ENCODE measurements at regions of chr1 and their contacts with region 1.

Region 1: DNA sequence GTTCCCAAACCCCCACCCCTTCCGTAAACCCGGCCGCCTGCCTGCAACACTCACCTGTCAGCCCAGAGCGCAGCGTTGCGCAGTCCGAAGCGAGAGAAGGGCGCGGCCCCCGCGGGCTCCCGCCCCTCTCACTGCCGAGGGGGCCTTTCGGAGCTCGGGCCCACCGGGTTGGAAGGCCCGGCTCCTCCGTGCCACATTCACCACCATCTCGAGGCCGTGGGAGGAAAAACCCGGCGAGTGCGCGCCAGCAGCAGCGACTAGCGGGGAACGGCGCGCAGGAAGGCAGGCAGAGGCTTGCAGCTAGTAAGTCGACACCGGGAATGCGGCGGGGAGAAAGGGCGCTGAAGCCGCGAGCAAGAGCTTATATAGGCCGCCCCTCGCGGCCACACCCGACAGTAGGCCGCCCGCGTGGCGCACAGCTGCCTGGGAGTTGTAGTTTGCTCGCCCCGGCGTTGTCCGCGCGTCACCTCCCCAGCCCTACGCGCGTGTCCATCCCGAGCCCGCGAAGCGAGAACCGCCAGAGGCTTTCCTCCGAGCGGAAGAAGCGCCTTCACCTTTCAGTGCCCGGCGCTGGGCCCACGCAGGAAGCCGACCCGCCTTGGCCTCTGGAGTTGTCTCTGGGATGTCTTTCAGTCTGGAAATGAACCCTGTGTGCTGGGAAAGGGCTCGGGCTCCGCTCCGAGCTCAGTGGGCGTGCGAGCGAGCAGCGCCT is 10.4 kb upstream of the RAB42 start:
- DNase-seq: peak; percentile 78
- ATAC-seq: peak; percentile 91
- H3K4me3 ChIP-seq: peak overlapping the region; percentile 99
- H3K27ac ChIP-seq: peak overlapping the region; percentile 55
- H3K4me1 ChIP-seq: peaks cover 14% of the 10 kb centered on the region
- H3K27me3 ChIP-seq: no peaks in the 10 kb centered on the region
- CTCF ChIP-seq: peak in 1 of 3 experiments; percentile 7; a peak in 1 of 6 replicates
- EP300 ChIP-seq: 0 out of 4 replicates have a peak, but pooled peaks of 1 of the 2 experiments have one; percentile 22
- POLR2A ChIP-seq: peak; percentile 100
- RAD21 ChIP-seq: no peak

Region 2: GRCh38 chr1:28505406-28506187 is 76.1 kb before region 1 on chr1 and contains the start of gene RCC1:
- CTCF ChIA-PET with region 1: interaction called, 3 read pairs
- POLR2A ChIA-PET with region 1: interaction called, 81 read pairs
- RAD21 ChIA-PET with region 1: interaction called, 3 read pairs
- SMC1A ChIA-PET with region 1: interaction called, 28 read pairs
- in situ Hi-C with region 1: no loop called
- intact Hi-C with region 1: no loop called
- DNase-seq: peak; percentile 98
- ATAC-seq: peak; percentile 80
- H3K4me3 ChIP-seq: peak within 1 kb of the TSS; percentile 84
- H3K27ac ChIP-seq: peak within 1 kb of the TSS; percentile 94
- H3K4me1 ChIP-seq: peaks cover 10% of the 10 kb centered on the region
- H3K27me3 ChIP-seq: no peaks in the 10 kb centered on the region
- CTCF ChIP-seq: no peak
- EP300 ChIP-seq: no peak
- POLR2A ChIP-seq: peak; percentile 89
- RAD21 ChIP-seq: no peak
- polyA plus RNA-seq, gene RCC1: 8.3 to 15.2 TPM

Region 3: GRCh38 chr1:28518000-28518744 is 63.5 kb before region 1 on chr1:
- CTCF ChIA-PET with region 1: interaction called, 49 read pairs
- POLR2A ChIA-PET with region 1: interaction called, 81 read pairs
- RAD21 ChIA-PET with region 1: interaction called, 12 read pairs
- SMC1A ChIA-PET with region 1: interaction called, 47 read pairs
- in situ Hi-C with region 1: no loop called
- intact Hi-C with region 1: loop called (anchors 1 kb)
- DNase-seq: no peak
- ATAC-seq: peak; percentile 72
- H3K4me3 ChIP-seq: peak overlapping the region; percentile 80
- H3K27ac ChIP-seq: peak overlapping the region; percentile 84
- H3K4me1 ChIP-seq: peaks cover 18% of the 10 kb centered on the region
- H3K27me3 ChIP-seq: no peaks in the 10 kb centered on the region
- CTCF ChIP-seq: peak; percentile 94 to 99 (median 97); a peak in 5 of 6 replicates
- EP300 ChIP-seq: no peak
- POLR2A ChIP-seq: peak; percentile 89
- RAD21 ChIP-seq: peak; percentile 89

Region 4: GRCh38 chr1:28560886-28561285 is 20.8 kb before region 1 on chr1:
- CTCF ChIA-PET with region 1: interaction called, 34 read pairs
- POLR2A ChIA-PET with region 1: interaction called, 132 read pairs
- RAD21 ChIA-PET with region 1: interaction called, 3 read pairs
- SMC1A ChIA-PET with region 1: interaction called, 5 read pairs
- in situ Hi-C with region 1: no loop called
- intact Hi-C with region 1: no loop called
- DNase-seq: no peak
- ATAC-seq: no peak
- H3K4me3 ChIP-seq: no peak overlapping the region
- H3K27ac ChIP-seq: no peak overlapping the region
- H3K4me1 ChIP-seq: no peaks in the 10 kb centered on the region
- H3K27me3 ChIP-seq: no peaks in the 10 kb centered on the region
- CTCF ChIP-seq: no peak
- EP300 ChIP-seq: no peak
- POLR2A ChIP-seq: no peak
- RAD21 ChIP-seq: no peak

Region 5: GRCh38 chr1:28642847-28643635 is 61.3 kb after region 1 on chr1 and contains the start of gene TAF12:
- CTCF ChIA-PET with region 1: interaction called, 11 read pairs
- POLR2A ChIA-PET with region 1: interaction called, 9 read pairs
- RAD21 ChIA-PET with region 1: interaction called, 6 read pairs
- SMC1A ChIA-PET with region 1: interaction called, 4 read pairs
- in situ Hi-C with region 1: no loop called
- intact Hi-C with region 1: loop called (anchors 2 kb)
- DNase-seq: peak; percentile 93
- ATAC-seq: peak; percentile 90
- H3K4me3 ChIP-seq: peak within 1 kb of the TSS; percentile 92
- H3K27ac ChIP-seq: peak within 1 kb of the TSS; percentile 90
- H3K4me1 ChIP-seq: peaks cover 13% of the 10 kb centered on the region
- H3K27me3 ChIP-seq: no peaks in the 10 kb centered on the region
- CTCF ChIP-seq: peak; percentile 32 to 73 (median 42); a peak in 4 of 6 replicates
- EP300 ChIP-seq: 0 out of 4 replicates have a peak, but pooled peaks of 1 of the 2 experiments have one; percentile 31
- POLR2A ChIP-seq: peak; percentile 99
- RAD21 ChIP-seq: peak; percentile 49
- polyA plus RNA-seq, gene TAF12: 34.3 to 41.9 TPM

Region 6: DNA sequence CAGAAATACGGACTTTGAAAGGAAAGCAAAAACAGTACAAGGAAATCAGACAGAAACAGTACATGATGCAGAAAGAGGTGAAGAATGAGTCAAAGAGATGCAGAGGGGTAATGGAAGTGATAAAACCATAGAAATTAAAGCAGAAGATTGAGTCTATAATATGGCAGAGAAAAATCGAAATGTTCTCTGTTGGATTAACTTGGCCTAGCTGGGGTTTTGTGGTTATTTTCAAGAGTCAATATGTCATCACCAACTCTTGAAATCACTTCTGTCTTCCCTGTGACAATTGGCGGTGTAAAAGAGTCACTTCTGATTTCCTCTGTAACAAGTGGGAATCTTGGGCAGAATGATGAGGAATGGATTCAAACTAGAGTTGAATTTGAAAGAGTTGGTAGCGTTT is 162.5 kb after region 1 on chr1:
- CTCF ChIA-PET with region 1: no interaction called
- POLR2A ChIA-PET with region 1: no interaction called
- RAD21 ChIA-PET with region 1: no interaction called
- SMC1A ChIA-PET with region 1: no interaction called
- in situ Hi-C with region 1: no loop called
- intact Hi-C with region 1: no loop called
- DNase-seq: no peak
- ATAC-seq: peak; percentile 48
- H3K4me3 ChIP-seq: peak overlapping the region; percentile 35; the same call in 1 of the 2 replicates
- H3K27ac ChIP-seq: no peak overlapping the region
- H3K4me1 ChIP-seq: no peaks in the 10 kb centered on the region; the same call in 1 of the 2 replicates
- H3K27me3 ChIP-seq: no peaks in the 10 kb centered on the region
- CTCF ChIP-seq: no peak
- EP300 ChIP-seq: no peak
- POLR2A ChIP-seq: no peak
- RAD21 ChIP-seq: no peak